GM12878 (cell line): ENCODE measurements at regions of chr6 and their contacts with region 1.

Region 1: GRCh38 chr6:5403609-5404008 is 142.3 kb downstream of the FARS2 start:
- DNase-seq: no peak
- ATAC-seq: no peak
- H3K4me3 ChIP-seq: no peak overlapping the region
- H3K27ac ChIP-seq: no peak overlapping the region
- H3K4me1 ChIP-seq: no peaks in the 10 kb centered on the region
- H3K27me3 ChIP-seq: no peaks in the 10 kb centered on the region
- CTCF ChIP-seq: no peak
- EP300 ChIP-seq: no peak
- POLR2A ChIP-seq: no peak
- RAD21 ChIP-seq: no peak

Region 2: GRCh38 chr6:5053038-5053437 is 350.6 kb before region 1 on chr6:
- CTCF ChIA-PET with region 1: interaction called, 3 read pairs
- POLR2A ChIA-PET with region 1: no interaction called
- RAD21 ChIA-PET with region 1: no interaction called
- SMC1A ChIA-PET with region 1: no interaction called
- in situ Hi-C with region 1: no loop called
- intact Hi-C with region 1: loop called (anchors 2 kb)
- DNase-seq: no peak
- ATAC-seq: no peak
- H3K4me3 ChIP-seq: no peak overlapping the region
- H3K27ac ChIP-seq: no peak overlapping the region
- H3K4me1 ChIP-seq: no peaks in the 10 kb centered on the region
- H3K27me3 ChIP-seq: no peaks in the 10 kb centered on the region
- CTCF ChIP-seq: no peak
- EP300 ChIP-seq: no peak
- POLR2A ChIP-seq: no peak
- RAD21 ChIP-seq: no peak

Region 3: GRCh38 chr6:5167501-5167900 is 236.1 kb before region 1 on chr6:
- CTCF ChIA-PET with region 1: no interaction called
- POLR2A ChIA-PET with region 1: interaction called, 13 read pairs
- RAD21 ChIA-PET with region 1: no interaction called
- SMC1A ChIA-PET with region 1: no interaction called
- in situ Hi-C with region 1: no loop called
- intact Hi-C with region 1: no loop called
- DNase-seq: no peak
- ATAC-seq: no peak
- H3K4me3 ChIP-seq: no peak overlapping the region
- H3K27ac ChIP-seq: no peak overlapping the region
- H3K4me1 ChIP-seq: no peaks in the 10 kb centered on the region
- H3K27me3 ChIP-seq: no peaks in the 10 kb centered on the region
- CTCF ChIP-seq: no peak
- EP300 ChIP-seq: no peak
- POLR2A ChIP-seq: no peak
- RAD21 ChIP-seq: no peak